CD8-positive, alpha-beta memory T cell (primary cell): ENCODE measurements at regions of chr10 and their contacts with region 1.

Region 1: GRCh38 chr10:14822879-14823755 is 14.7 kb downstream of the CDNF start:
- DNase-seq: peak in 4 of 5 donors; percentile 13 to 58 (median 24)
- H3K4me3 ChIP-seq: no peak overlapping the region
- H3K4me3 Mint-ChIP-seq: no peak overlapping the region
- H3K27ac ChIP-seq: no peak overlapping the region
- H3K27ac Mint-ChIP-seq: no peak overlapping the region
- H3K4me1 ChIP-seq: no peaks in the 10 kb centered on the region
- H3K4me1 Mint-ChIP-seq: peaks cover 0 to 6% (median 3%) of the 10 kb centered on the region in 3 donors
- H3K27me3 ChIP-seq: no peaks in the 10 kb centered on the region
- H3K27me3 Mint-ChIP-seq: no peaks in the 10 kb centered on the region

Region 2: GRCh38 chr10:14498326-14498725 is 324.8 kb before region 1 on chr10:
- CTCF ChIA-PET with region 1: interaction called, 10 read pairs
- POLR2A ChIA-PET with region 1: no interaction called
- DNase-seq: no peak
- H3K4me3 ChIP-seq: no peak overlapping the region
- H3K4me3 Mint-ChIP-seq: no peak overlapping the region
- H3K27ac ChIP-seq: no peak overlapping the region
- H3K27ac Mint-ChIP-seq: peak overlapping the region in 3 of 8 donors; percentile 15 to 47 (median 29)
- H3K4me1 ChIP-seq: peaks cover 5% of the 10 kb centered on the region
- H3K4me1 Mint-ChIP-seq: peaks cover 6 to 12% (median 11%) of the 10 kb centered on the region in 3 donors
- H3K27me3 ChIP-seq: no peaks in the 10 kb centered on the region
- H3K27me3 Mint-ChIP-seq: no peaks in the 10 kb centered on the region

Region 3: DNA sequence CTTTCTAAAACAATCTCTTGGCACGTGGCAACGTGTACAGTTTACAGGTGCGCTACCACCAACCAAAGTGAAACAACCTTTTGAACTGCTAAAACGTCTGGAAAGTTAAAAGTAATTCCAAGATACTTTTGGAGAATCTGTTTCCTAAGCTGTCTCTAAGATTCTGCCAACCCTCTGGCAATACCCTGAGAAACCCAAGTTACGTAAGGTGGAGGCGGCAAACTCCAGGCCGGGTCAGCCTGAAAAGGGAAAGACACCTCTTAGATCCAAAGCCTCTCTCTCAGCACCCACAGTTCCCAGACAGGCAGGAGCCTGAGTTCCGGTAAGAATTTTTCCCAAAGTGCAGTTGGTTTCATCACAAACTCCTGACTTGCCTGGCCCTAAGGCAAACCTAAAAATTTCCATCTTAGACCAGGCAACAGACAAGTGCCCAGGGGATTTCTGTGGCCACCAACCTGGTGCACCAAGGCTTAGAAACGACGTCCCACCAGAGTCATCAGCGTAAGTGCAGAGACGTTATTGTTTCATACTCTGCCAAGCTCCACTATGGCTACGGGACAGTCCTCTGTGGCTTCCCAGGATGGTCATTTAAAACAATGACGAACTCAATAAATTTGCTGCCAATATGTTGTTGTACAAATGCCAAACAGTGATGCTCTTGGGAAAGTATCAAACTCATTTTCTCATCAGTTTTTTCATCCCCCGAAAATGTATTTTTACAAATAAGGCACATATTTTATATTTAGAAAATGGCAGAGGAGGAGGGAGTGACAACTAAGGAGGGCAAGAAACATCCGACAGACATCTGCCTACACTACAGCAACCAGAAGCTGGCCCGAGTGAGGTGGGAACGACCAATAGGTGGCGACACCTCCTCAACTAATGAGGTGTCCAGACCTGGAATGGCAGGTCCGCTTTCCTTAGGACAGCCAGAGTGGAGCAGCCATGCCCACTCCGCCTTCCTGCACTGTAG is 286.6 kb before region 1 on chr10:
- CTCF ChIA-PET with region 1: interaction called, 11 read pairs
- POLR2A ChIA-PET with region 1: no interaction called
- DNase-seq: peak in 2 of 5 donors; percentile 28 to 59
- H3K4me3 ChIP-seq: no peak overlapping the region
- H3K4me3 Mint-ChIP-seq: no peak overlapping the region
- H3K27ac ChIP-seq: no peak overlapping the region
- H3K27ac Mint-ChIP-seq: peak overlapping the region in 7 of 8 donors; percentile 21 to 90 (median 76)
- H3K4me1 ChIP-seq: peaks cover 52% of the 10 kb centered on the region
- H3K4me1 Mint-ChIP-seq: peaks cover 76 to 97% (median 94%) of the 10 kb centered on the region in 3 donors
- H3K27me3 ChIP-seq: no peaks in the 10 kb centered on the region
- H3K27me3 Mint-ChIP-seq: no peaks in the 10 kb centered on the region

Region 4: GRCh38 chr10:14852236-14852635 is 29.1 kb after region 1 on chr10:
- CTCF ChIA-PET with region 1: no interaction called
- POLR2A ChIA-PET with region 1: no interaction called
- DNase-seq: no peak
- H3K4me3 ChIP-seq: no peak overlapping the region
- H3K4me3 Mint-ChIP-seq: no peak overlapping the region
- H3K27ac ChIP-seq: no peak overlapping the region
- H3K27ac Mint-ChIP-seq: no peak overlapping the region
- H3K4me1 ChIP-seq: no peaks in the 10 kb centered on the region
- H3K4me1 Mint-ChIP-seq: peaks cover 0 to under 1% (median 0%) of the 10 kb centered on the region in 3 donors
- H3K27me3 ChIP-seq: no peaks in the 10 kb centered on the region
- H3K27me3 Mint-ChIP-seq: no peaks in the 10 kb centered on the region